Activated B cell treated with CpG ODN at 0.5 μM for 24 hours (primary cell): ENCODE measurements at regions of chr20 and their contacts with region 1.

Region 1: GRCh38 chr20:3820048-3820900 is at the start of gene AP5S1:
- DNase-seq: peak; percentile 95
- ATAC-seq: peak; percentile 88
- H3K4me3 Mint-ChIP-seq: peak within 1 kb of the TSS; percentile 92
- H3K27ac Mint-ChIP-seq: peak within 1 kb of the TSS; percentile 97
- H3K4me1 Mint-ChIP-seq: peaks cover 20% of the 10 kb centered on the region
- H3K27me3 Mint-ChIP-seq: no peaks in the 10 kb centered on the region
- CTCF ChIP-seq: peak; percentile 96
- total RNA-seq, gene AP5S1: 13.4 and 13.5 TPM in 2 replicates

Region 2: GRCh38 chr20:3753098-3753980 is 66.9 kb before region 1 on chr20:
- CTCF ChIA-PET with region 1: no interaction called
- POLR2A ChIA-PET with region 1: interaction called, 4 read pairs
- intact Hi-C with region 1: loop called (anchors 1 kb)
- DNase-seq: no peak
- ATAC-seq: peak; percentile 63
- H3K4me3 Mint-ChIP-seq: peak overlapping the region; percentile 12
- H3K27ac Mint-ChIP-seq: no peak overlapping the region
- H3K4me1 Mint-ChIP-seq: peaks cover 11% of the 10 kb centered on the region
- H3K27me3 Mint-ChIP-seq: no peaks in the 10 kb centered on the region
- CTCF ChIP-seq: no peak

Region 3: GRCh38 chr20:3786665-3787323 is 33.5 kb before region 1 on chr20 and contains the start of gene CENPB:
- CTCF ChIA-PET with region 1: interaction called, 33 read pairs
- POLR2A ChIA-PET with region 1: interaction called, 65 read pairs
- intact Hi-C with region 1: loop called (anchors 1 kb)
- DNase-seq: peak; percentile 96
- ATAC-seq: peak; percentile 95
- H3K4me3 Mint-ChIP-seq: peak within 1 kb of the TSS; percentile 82
- H3K27ac Mint-ChIP-seq: peak within 1 kb of the TSS; percentile 70
- H3K4me1 Mint-ChIP-seq: peaks cover 24% of the 10 kb centered on the region
- H3K27me3 Mint-ChIP-seq: no peaks in the 10 kb centered on the region
- CTCF ChIP-seq: no peak
- total RNA-seq, gene CENPB: 50.1 and 51.7 TPM in 2 replicates

Region 4: GRCh38 chr20:3846740-3847428 is 26.6 kb after region 1 on chr20 and contains the start of gene MAVS:
- CTCF ChIA-PET with region 1: interaction called, 4 read pairs
- POLR2A ChIA-PET with region 1: interaction called, 7 read pairs
- intact Hi-C with region 1: loop called (anchors 1 kb)
- DNase-seq: peak; percentile 85
- ATAC-seq: peak; percentile 99
- H3K4me3 Mint-ChIP-seq: peak within 1 kb of the TSS; percentile 88
- H3K27ac Mint-ChIP-seq: peak within 1 kb of the TSS; percentile 80
- H3K4me1 Mint-ChIP-seq: peaks cover 26% of the 10 kb centered on the region
- H3K27me3 Mint-ChIP-seq: no peaks in the 10 kb centered on the region
- CTCF ChIP-seq: no peak
- total RNA-seq, gene MAVS: 33.5 and 39.7 TPM in 2 replicates

Region 5: GRCh38 chr20:3888622-3889488 is 68.6 kb after region 1 on chr20 and contains the start of gene PANK2:
- CTCF ChIA-PET with region 1: no interaction called
- POLR2A ChIA-PET with region 1: interaction called, 10 read pairs
- intact Hi-C with region 1: loop called (anchors 1 kb)
- DNase-seq: peak; percentile 92
- ATAC-seq: peak; percentile 96
- H3K4me3 Mint-ChIP-seq: peak within 1 kb of the TSS; percentile 97
- H3K27ac Mint-ChIP-seq: peak within 1 kb of the TSS; percentile 92
- H3K4me1 Mint-ChIP-seq: peaks cover 53% of the 10 kb centered on the region
- H3K27me3 Mint-ChIP-seq: no peaks in the 10 kb centered on the region
- CTCF ChIP-seq: no peak
- total RNA-seq, gene PANK2: 52.1 and 55.0 TPM in 2 replicates

Region 6: GRCh38 chr20:4038047-4038459 is 217.8 kb after region 1 on chr20:
- CTCF ChIA-PET with region 1: no interaction called
- POLR2A ChIA-PET with region 1: interaction called, 5 read pairs
- intact Hi-C with region 1: loop called (anchors 2 kb)
- DNase-seq: peak; percentile 52
- ATAC-seq: peak; percentile 100
- H3K4me3 Mint-ChIP-seq: peak overlapping the region; percentile 82
- H3K27ac Mint-ChIP-seq: peak overlapping the region; percentile 96
- H3K4me1 Mint-ChIP-seq: peaks cover 16% of the 10 kb centered on the region
- H3K27me3 Mint-ChIP-seq: no peaks in the 10 kb centered on the region
- CTCF ChIP-seq: no peak